Activated CD4-positive, alpha-beta memory T cell treated with anti-CD3 and anti-CD28 coated beads for 36 hours (primary cell): ENCODE measurements at regions of chr14 and their contacts with region 1.

Region 1: GRCh38 chr14:77457522-77458290 is at the starts of genes AHSA1 and VIPAS39:
- DNase-seq: peak; percentile 97
- H3K4me3 Mint-ChIP-seq: peak within 1 kb of the TSS; percentile 100
- H3K27ac Mint-ChIP-seq: peak within 1 kb of the TSS; percentile 98
- H3K4me1 Mint-ChIP-seq: peaks cover 35% of the 10 kb centered on the region
- H3K27me3 Mint-ChIP-seq: no peaks in the 10 kb centered on the region
- total RNA-seq, gene AHSA1: 253 to 269 TPM
- total RNA-seq, gene VIPAS39: 14.9 to 16.8 TPM

Region 2: DNA sequence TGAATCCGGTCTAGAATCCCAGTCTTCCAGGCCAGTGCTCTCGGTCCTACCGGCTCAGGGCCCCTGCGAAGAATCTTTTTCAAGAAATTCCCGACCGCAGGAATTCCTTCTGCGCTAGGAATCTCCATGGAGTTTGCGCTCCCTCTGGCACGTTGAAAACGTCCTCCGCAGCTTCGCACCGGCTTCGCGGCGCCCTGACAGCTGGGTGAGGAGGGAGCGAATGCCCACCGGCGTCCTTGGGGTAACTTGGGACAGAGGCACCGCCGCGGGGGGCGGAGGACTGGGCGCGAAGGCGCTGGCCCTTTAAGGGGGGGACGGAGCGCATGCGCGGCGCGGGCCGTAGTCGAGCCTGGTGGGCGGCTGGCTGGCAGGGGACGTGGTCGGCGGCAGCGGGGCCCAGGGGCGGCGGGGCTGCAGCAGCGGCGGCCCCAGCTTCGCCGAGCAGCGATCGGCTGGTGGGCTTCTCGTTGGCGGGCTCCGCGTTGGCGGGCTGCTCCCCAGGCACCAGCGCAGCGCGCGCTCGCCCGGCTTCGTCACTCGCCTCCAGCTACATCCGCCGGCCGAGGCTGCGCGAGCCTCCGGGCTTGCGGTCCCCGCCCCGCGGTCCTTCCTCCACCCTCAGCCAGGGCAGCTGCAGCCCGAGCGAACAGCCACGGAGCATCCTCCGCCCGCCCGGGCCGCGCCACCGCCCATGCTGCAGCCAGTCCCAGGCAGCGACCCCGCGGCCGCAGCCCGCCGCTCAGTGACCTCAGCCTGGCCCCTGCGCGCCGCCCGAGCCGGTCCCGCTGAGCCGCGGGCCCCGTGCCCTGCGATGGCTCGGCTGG is 696.4 kb before region 1 on chr14 and contains the start of gene VASH1:
- CTCF ChIA-PET with region 1: no interaction called
- POLR2A ChIA-PET with region 1: no interaction called
- intact Hi-C with region 1: loop called (anchors 10 kb)
- DNase-seq: peak; percentile 73
- H3K4me3 Mint-ChIP-seq: peak within 1 kb of the TSS; percentile 75
- H3K27ac Mint-ChIP-seq: no peak within 1 kb of the TSS
- H3K4me1 Mint-ChIP-seq: peaks cover 12% of the 10 kb centered on the region
- H3K27me3 Mint-ChIP-seq: peaks cover 6% of the 10 kb centered on the region
- total RNA-seq, gene VASH1: 6.1 TPM

Region 3: GRCh38 chr14:77040059-77040740 is 417.5 kb before region 1 on chr14:
- CTCF ChIA-PET with region 1: no interaction called
- POLR2A ChIA-PET with region 1: no interaction called
- intact Hi-C with region 1: loop called (anchors 5 kb)
- DNase-seq: peak; percentile 97
- H3K4me3 Mint-ChIP-seq: peak overlapping the region; percentile 77
- H3K27ac Mint-ChIP-seq: peak overlapping the region; percentile 99
- H3K4me1 Mint-ChIP-seq: peaks cover 88% of the 10 kb centered on the region
- H3K27me3 Mint-ChIP-seq: no peaks in the 10 kb centered on the region

Region 4: DNA sequence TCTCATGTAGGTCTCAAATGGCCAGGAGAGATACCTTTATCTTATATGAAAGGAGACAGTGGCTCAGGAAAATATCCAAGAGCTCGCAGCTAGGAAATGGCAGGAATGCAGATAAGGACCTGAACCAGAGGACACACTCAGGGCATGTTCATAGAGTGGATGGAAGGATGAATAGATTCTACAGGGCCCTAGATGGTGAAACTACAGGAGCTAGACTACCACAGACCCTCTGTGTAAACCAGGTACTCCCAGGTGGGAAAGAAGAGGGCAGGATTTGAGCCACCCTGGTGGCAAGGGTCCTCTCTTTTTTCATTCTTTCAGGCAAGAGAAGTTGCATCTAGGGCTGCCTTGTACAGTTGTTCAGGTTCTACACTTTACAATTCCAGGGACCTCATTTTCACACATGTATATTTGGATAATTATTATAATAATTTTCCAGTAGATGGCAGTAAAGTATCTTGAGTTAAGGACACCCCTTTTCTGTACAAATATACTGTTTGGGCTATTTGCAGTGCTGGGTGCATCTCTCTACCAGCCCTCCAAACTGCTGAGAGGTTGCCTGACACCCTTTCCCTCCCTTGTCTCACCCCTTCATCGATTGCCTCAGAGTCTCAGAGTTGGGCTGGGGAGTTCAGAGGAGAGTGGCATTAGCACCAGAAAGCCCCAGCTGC is 305.7 kb before region 1 on chr14:
- CTCF ChIA-PET with region 1: interaction called, 8 read pairs
- POLR2A ChIA-PET with region 1: no interaction called
- intact Hi-C with region 1: loop called (anchors 5 kb)
- DNase-seq: no peak
- H3K4me3 Mint-ChIP-seq: no peak overlapping the region
- H3K27ac Mint-ChIP-seq: no peak overlapping the region
- H3K4me1 Mint-ChIP-seq: no peaks in the 10 kb centered on the region
- H3K27me3 Mint-ChIP-seq: peaks cover 31% of the 10 kb centered on the region

Region 5: GRCh38 chr14:77376771-77377501 is 80.8 kb before region 1 on chr14 and contains the starts of genes SAMD15 and TMED8:
- CTCF ChIA-PET with region 1: interaction called, 9 read pairs
- POLR2A ChIA-PET with region 1: interaction called, 10 read pairs
- intact Hi-C with region 1: loop called (anchors 1 kb)
- DNase-seq: peak; percentile 88
- H3K4me3 Mint-ChIP-seq: peak within 1 kb of the TSS; percentile 92
- H3K27ac Mint-ChIP-seq: peak within 1 kb of the TSS; percentile 82
- H3K4me1 Mint-ChIP-seq: peaks cover 42% of the 10 kb centered on the region
- H3K27me3 Mint-ChIP-seq: no peaks in the 10 kb centered on the region
- total RNA-seq, gene SAMD15: 0.38 TPM in 1 of 2 experiments, not detected in the other
- total RNA-seq, gene TMED8: 26.9 to 27.8 TPM

Region 6: DNA sequence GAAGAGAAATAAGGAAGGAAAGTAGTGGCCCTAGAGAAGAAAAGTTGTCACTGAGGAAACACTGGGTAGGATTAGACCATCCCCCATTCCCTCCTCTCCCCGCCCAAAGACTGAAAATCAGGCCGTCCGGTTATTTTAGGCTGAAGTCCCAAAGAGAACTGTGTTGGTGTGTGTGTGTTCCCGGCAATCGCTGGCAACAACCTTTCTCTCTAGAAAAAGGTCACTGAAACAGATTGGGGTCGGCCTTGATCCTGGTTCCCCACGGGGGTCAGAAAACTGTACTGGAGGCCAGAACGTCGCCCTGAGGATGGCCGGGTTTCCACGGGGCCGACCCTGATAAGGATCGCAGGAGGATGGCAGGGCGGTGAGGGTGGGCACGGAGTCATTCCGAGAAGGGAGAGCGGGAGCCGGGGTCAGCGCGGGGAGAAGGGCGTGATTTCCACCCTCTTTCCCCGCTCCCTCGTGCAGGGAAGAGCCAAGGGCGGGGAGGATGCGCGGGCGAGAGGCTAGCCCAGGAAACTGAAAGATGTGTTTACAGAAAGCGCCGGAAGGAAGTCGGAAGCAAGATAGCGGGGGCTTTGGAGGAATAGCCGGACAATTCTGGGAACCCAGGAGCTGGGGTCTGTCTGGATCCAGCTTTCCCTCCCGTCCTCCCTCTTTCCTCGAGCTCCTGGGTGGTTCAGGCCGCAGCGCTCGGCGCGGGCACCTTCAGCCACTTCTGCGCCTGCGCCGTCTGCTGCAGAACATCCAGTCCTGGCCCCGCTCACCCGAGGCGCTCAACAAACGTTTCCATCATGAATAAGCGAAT is 184.0 kb after region 1 on chr14:
- CTCF ChIA-PET with region 1: no interaction called
- POLR2A ChIA-PET with region 1: no interaction called
- intact Hi-C with region 1: loop called (anchors 2 kb)
- DNase-seq: peak; percentile 82
- H3K4me3 Mint-ChIP-seq: peak overlapping the region; percentile 74
- H3K27ac Mint-ChIP-seq: peak overlapping the region; percentile 75
- H3K4me1 Mint-ChIP-seq: peaks cover 17% of the 10 kb centered on the region
- H3K27me3 Mint-ChIP-seq: no peaks in the 10 kb centered on the region

Region 7: DNA sequence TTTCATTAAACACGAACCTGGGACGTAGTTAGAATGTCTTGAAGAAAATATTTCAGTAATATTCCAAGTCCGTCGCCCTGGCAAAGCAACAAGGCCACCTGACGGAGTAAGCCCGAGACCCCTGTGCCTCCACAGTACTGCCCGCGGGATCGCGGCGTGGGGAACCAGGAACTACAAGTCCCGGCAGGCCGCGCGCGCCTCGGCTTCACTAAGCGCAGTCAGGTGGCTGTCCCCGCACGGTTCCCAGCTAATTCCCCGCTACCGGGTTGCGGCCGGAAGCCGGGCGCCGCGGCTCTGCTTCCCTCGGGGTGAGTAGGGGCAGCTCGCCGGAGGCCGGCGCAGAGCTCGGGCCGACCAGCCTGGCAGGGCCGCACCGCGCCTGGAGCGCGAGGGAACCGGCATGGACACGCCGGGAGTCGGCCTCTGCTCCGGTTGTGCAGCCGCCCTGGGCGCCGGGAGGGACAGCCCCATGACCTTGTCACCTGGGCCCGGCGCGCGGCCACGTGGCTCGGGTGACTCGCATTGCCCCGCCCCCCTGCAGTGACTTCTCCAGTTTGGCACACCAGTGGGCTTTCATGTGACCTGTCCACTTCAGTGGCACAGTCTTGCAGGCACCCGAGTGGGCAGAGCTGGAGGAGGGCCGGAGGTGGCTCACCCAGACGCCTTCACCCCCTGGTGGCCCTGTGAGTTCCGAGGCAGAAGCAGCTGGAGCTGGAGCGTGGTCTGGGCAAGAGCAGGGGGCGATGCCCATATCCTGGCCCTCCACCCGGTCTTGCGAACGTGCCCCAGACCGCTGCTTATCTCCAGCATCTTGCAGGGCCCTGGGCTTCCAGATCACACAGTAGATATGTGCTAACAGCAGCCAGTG is 342.4 kb after region 1 on chr14 and contains the start of gene ADCK1:
- CTCF ChIA-PET with region 1: interaction called, 5 read pairs
- POLR2A ChIA-PET with region 1: no interaction called
- intact Hi-C with region 1: loop called (anchors 1 kb)
- DNase-seq: peak; percentile 90
- H3K4me3 Mint-ChIP-seq: peak within 1 kb of the TSS; percentile 86
- H3K27ac Mint-ChIP-seq: peak within 1 kb of the TSS; percentile 84
- H3K4me1 Mint-ChIP-seq: peaks cover 11% of the 10 kb centered on the region
- H3K27me3 Mint-ChIP-seq: no peaks in the 10 kb centered on the region
- total RNA-seq, gene ADCK1: 3.2 to 3.7 TPM